ENCODE measurements at regions of chr11 and their contacts with region 1.

Region 1: GRCh38 chr11:128802358-128802981 is 64.6 kb downstream of the KCNJ1 start:
- DNase-seq: no peak
- H3K4me3 ChIP-seq: no peak overlapping the region
- H3K27ac ChIP-seq: no peak overlapping the region
- H3K4me1 ChIP-seq: peaks cover 0 to 12% (median 0%) of the 10 kb centered on the region in 4 donors
- H3K27me3 ChIP-seq: no peaks in the 10 kb centered on the region
- CTCF ChIP-seq: peak in 1 of 3 experiments; percentile 17
- EP300 ChIP-seq: no peak
- POLR2A ChIP-seq: no peak

Region 2: GRCh38 chr11:128552783-128553661 is 249.4 kb before region 1 on chr11:
- intact Hi-C with region 1: no loop called
- DNase-seq: peak; percentile 55
- H3K4me3 ChIP-seq: peak overlapping the region in 1 of 4 donors; percentile 1
- H3K27ac ChIP-seq: peak overlapping the region in 3 of 4 donors; percentile 30 to 48 (median 32)
- H3K4me1 ChIP-seq: peaks cover 25 to 39% (median 36%) of the 10 kb centered on the region in 4 donors
- H3K27me3 ChIP-seq: peaks cover 0 to 5% (median 0%) of the 10 kb centered on the region in 4 donors
- CTCF ChIP-seq: no peak
- EP300 ChIP-seq: no peak
- POLR2A ChIP-seq: no peak

Region 3: GRCh38 chr11:128669506-128670270 is 132.8 kb before region 1 on chr11:
- intact Hi-C with region 1: no loop called
- DNase-seq: no peak
- H3K4me3 ChIP-seq: no peak overlapping the region
- H3K27ac ChIP-seq: no peak overlapping the region
- H3K4me1 ChIP-seq: no peaks in the 10 kb centered on the region
- H3K27me3 ChIP-seq: peaks cover 0 to 2% (median 0%) of the 10 kb centered on the region in 4 donors
- CTCF ChIP-seq: no peak
- EP300 ChIP-seq: no peak
- POLR2A ChIP-seq: no peak

Region 4: GRCh38 chr11:128776424-128777284 is 25.8 kb before region 1 on chr11:
- intact Hi-C with region 1: loop called (anchors 2 kb)
- DNase-seq: no peak
- H3K4me3 ChIP-seq: no peak overlapping the region
- H3K27ac ChIP-seq: no peak overlapping the region
- H3K4me1 ChIP-seq: peaks cover 0 to 17% (median 8%) of the 10 kb centered on the region in 4 donors
- H3K27me3 ChIP-seq: peaks cover 0 to 14% (median 0%) of the 10 kb centered on the region in 4 donors
- CTCF ChIP-seq: peak in 2 of 3 experiments; percentile 4 to 42
- EP300 ChIP-seq: no peak
- POLR2A ChIP-seq: no peak

Region 5: GRCh38 chr11:129077191-129077590 is 274.7 kb after region 1 on chr11:
- intact Hi-C with region 1: no loop called
- DNase-seq: no peak
- H3K4me3 ChIP-seq: no peak overlapping the region
- H3K27ac ChIP-seq: no peak overlapping the region
- H3K4me1 ChIP-seq: no peaks in the 10 kb centered on the region
- H3K27me3 ChIP-seq: no peaks in the 10 kb centered on the region
- CTCF ChIP-seq: no peak
- EP300 ChIP-seq: no peak
- POLR2A ChIP-seq: no peak

Measured in esophagus muscularis mucosa (tissue), 4 donors.